ENCODE measurements at regions of chr5 and their contacts with region 1.

Region 1: DNA sequence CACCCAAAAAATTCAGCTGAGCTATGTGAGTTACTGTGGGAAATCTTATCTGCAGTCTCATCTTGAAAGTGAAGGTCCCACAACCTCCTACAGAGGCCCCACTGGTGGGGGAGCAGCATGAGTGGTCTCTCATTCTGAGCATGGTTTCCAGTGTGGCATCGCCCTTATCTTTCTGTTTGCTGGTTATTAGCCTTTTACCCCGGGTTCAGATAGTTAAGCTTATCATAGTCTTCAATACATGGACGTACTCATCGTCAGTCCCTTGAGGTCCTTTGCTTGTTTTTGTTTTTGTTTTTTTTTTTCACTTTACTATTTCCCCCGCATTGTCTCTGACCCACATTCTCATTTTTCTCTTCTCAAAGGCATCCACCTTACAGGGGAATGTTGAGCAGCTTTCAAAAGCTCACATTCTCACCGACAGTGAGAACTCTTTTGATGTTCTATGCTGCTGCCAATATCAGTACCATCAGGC is 7.7 kb upstream of the HAVCR2 start:
- DNase-seq: peak; percentile 75
- ATAC-seq: peak; percentile 74
- H3K4me3 Mint-ChIP-seq: peak overlapping the region; percentile 54
- H3K27ac Mint-ChIP-seq: peak overlapping the region; percentile 84
- H3K4me1 Mint-ChIP-seq: peaks cover 35% of the 10 kb centered on the region
- H3K27me3 Mint-ChIP-seq: no peaks in the 10 kb centered on the region
- CTCF ChIP-seq: no peak

Region 2: GRCh38 chr5:156698323-156698722 is 418.2 kb before region 1 on chr5:
- CTCF ChIA-PET with region 1: no interaction called
- POLR2A ChIA-PET with region 1: no interaction called
- intact Hi-C with region 1: no loop called
- DNase-seq: no peak
- ATAC-seq: no peak
- H3K4me3 Mint-ChIP-seq: no peak overlapping the region
- H3K27ac Mint-ChIP-seq: no peak overlapping the region
- H3K4me1 Mint-ChIP-seq: no peaks in the 10 kb centered on the region
- H3K27me3 Mint-ChIP-seq: peaks cover 2% of the 10 kb centered on the region
- CTCF ChIP-seq: no peak

Region 3: GRCh38 chr5:156984064-156984463 is 132.5 kb before region 1 on chr5:
- CTCF ChIA-PET with region 1: no interaction called
- POLR2A ChIA-PET with region 1: no interaction called
- intact Hi-C with region 1: no loop called
- DNase-seq: no peak
- ATAC-seq: no peak
- H3K4me3 Mint-ChIP-seq: no peak overlapping the region
- H3K27ac Mint-ChIP-seq: no peak overlapping the region
- H3K4me1 Mint-ChIP-seq: no peaks in the 10 kb centered on the region
- H3K27me3 Mint-ChIP-seq: no peaks in the 10 kb centered on the region
- CTCF ChIP-seq: no peak

Region 4: GRCh38 chr5:157100140-157100679 is 16.3 kb before region 1 on chr5:
- CTCF ChIA-PET with region 1: interaction called, 4 read pairs
- POLR2A ChIA-PET with region 1: interaction called, 11 read pairs
- intact Hi-C with region 1: no loop called
- DNase-seq: peak; percentile 78
- ATAC-seq: peak; percentile 92
- H3K4me3 Mint-ChIP-seq: peak overlapping the region; percentile 35
- H3K27ac Mint-ChIP-seq: peak overlapping the region; percentile 95
- H3K4me1 Mint-ChIP-seq: peaks cover 36% of the 10 kb centered on the region
- H3K27me3 Mint-ChIP-seq: no peaks in the 10 kb centered on the region
- CTCF ChIP-seq: no peak

Measured in activated CD8-positive, alpha-beta T cell treated with anti-CD3 and anti-CD28 coated beads for 36 hours (primary cell).